ENCODE measurements at regions of chr7 and their contacts with region 1.

Region 1: DNA sequence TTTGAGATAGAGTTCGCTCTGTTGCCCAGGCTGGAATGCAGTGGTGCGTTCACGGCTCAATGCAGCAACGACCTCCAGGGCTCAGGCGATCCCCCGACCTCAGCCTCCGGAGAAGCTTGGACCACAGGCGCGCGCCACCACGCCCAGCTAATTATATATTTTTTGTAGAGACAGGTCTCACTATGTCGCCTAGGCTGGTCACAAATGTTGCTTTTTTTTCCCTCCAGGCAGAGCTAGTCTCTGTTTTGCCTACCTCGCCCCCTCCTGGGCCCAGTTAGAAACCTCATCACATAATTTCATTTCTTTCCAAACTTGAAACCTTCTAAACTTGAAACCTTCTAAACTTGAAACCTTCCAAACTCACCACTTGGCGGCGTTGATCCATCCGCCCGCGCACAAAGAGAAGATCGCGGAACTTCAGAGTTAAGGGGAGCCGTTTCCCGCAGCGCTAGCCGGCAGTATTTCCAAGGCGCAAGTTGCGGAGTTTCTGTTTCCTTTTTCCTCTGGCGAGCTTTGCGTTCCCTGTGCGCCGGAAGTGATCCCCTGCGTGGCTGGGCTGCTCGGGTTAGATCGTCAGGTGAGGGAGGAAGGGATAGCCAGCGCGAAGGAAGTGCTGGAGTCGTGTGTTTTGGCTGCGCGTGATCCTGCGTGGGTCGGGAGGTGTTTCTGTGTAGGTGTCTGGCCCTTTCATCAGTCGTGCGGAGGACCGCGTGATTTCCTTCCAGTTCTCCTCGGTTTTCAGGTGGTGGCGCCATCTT is at the start of gene SSBP1:
- DNase-seq: peak; percentile 93 to 95 (median 93)
- H3K4me3 ChIP-seq: peak within 1 kb of the TSS; percentile 94 to 95
- H3K4me3 Mint-ChIP-seq: peak within 1 kb of the TSS; percentile 98 to 100 (median 99)
- H3K27ac ChIP-seq: peak within 1 kb of the TSS; percentile 85
- H3K27ac Mint-ChIP-seq: peak within 1 kb of the TSS; percentile 96 to 99 (median 99)
- H3K4me1 ChIP-seq: peaks cover 36% of the 10 kb centered on the region
- H3K4me1 Mint-ChIP-seq: peaks cover 26 to 60% (median 38%) of the 10 kb centered on the region in 4 donors
- H3K27me3 ChIP-seq: no peaks in the 10 kb centered on the region
- H3K27me3 Mint-ChIP-seq: no peaks in the 10 kb centered on the region
- total RNA-seq, gene SSBP1: 88.2 to 91.2 TPM

Region 2: DNA sequence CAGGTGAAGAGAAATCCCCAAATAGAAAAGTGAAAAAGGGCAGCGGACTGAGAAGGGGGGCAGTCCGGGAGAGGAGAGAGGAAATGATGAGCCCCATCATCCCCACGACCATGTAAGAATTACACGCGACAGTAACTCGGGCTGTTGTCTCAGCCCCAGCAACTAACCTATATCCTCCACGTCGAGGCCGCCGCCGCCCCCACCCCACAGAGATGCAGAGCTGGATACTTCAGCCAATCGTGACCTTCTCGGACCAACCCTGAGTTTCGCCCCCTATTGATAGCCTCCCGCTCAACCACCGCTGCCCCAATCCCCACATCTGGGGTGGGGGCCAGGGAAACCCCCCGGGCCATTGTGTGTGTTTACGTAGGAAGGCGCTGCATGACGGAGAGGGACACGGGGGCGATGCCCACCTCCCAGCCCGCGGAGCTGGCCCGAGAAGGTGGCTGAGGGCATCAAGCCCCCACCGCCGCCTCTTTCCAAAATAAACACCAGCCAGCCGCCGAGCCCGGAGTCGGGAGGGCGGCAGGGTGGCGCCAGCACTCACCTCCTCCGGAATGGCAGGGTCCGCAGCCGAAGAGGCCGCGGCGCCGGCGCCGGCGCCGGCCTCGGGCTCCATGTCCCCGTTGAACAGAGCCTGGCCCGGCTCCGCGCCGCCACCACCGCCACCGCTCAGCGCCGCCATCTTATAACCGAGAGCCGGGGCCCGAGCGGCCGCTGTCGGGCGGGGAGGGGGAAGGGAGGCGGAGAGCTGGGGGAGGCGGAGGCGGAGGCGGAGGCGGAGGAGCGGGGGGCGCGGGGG is 813.8 kb before region 1 on chr7:
- CTCF ChIA-PET with region 1: no interaction called
- POLR2A ChIA-PET with region 1: no interaction called
- intact Hi-C with region 1: loop called (anchors 1 kb)
- DNase-seq: peak; percentile 79 to 92 (median 83)
- H3K4me3 ChIP-seq: peak overlapping the region; percentile 68 to 90
- H3K4me3 Mint-ChIP-seq: no peak overlapping the region
- H3K27ac ChIP-seq: peak overlapping the region; percentile 95
- H3K27ac Mint-ChIP-seq: no peak overlapping the region
- H3K4me1 ChIP-seq: peaks cover 28% of the 10 kb centered on the region
- H3K4me1 Mint-ChIP-seq: peaks cover 11 to 29% (median 18%) of the 10 kb centered on the region in 4 donors
- H3K27me3 ChIP-seq: no peaks in the 10 kb centered on the region
- H3K27me3 Mint-ChIP-seq: peaks cover 0 to 4% of the 10 kb centered on the region in 2 donors

Region 3: DNA sequence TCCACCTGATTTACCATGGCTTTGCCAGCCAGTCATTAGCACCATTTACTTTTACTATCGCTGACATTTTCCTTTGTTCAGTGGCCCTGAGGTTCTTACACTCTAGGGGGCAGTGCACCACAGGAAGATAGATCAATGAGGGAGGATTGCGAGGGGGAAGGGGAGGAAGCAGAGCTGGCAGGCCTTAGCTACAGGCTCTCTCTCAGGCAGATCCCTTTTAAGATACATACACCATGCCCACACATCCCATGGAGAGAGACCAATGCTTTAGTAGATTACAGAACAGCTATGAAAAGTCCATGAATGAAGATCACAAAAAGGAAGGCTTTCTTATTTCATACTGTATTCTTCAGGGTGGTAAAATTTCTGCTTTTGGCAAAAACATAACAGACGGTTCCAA is 83.5 kb before region 1 on chr7:
- CTCF ChIA-PET with region 1: interaction called, 74 read pairs
- POLR2A ChIA-PET with region 1: interaction called, 16 read pairs
- intact Hi-C with region 1: loop called (anchors 1 kb)
- DNase-seq: peak; percentile 62 to 71 (median 67)
- H3K4me3 ChIP-seq: no peak overlapping the region
- H3K4me3 Mint-ChIP-seq: no peak overlapping the region
- H3K27ac ChIP-seq: no peak overlapping the region
- H3K27ac Mint-ChIP-seq: peak overlapping the region in 6 of 7 donors; percentile 1 to 92 (median 76)
- H3K4me1 ChIP-seq: no peaks in the 10 kb centered on the region
- H3K4me1 Mint-ChIP-seq: peaks cover 4 to 7% (median 5%) of the 10 kb centered on the region in 4 donors
- H3K27me3 ChIP-seq: no peaks in the 10 kb centered on the region
- H3K27me3 Mint-ChIP-seq: no peaks in the 10 kb centered on the region

Region 4: GRCh38 chr7:141674702-141675101 is 63.3 kb before region 1 on chr7:
- CTCF ChIA-PET with region 1: no interaction called
- POLR2A ChIA-PET with region 1: no interaction called
- intact Hi-C with region 1: no loop called
- DNase-seq: no peak
- H3K4me3 ChIP-seq: no peak overlapping the region
- H3K4me3 Mint-ChIP-seq: no peak overlapping the region
- H3K27ac ChIP-seq: no peak overlapping the region
- H3K27ac Mint-ChIP-seq: peak overlapping the region in 2 of 7 donors; percentile 32 to 51
- H3K4me1 ChIP-seq: no peaks in the 10 kb centered on the region
- H3K4me1 Mint-ChIP-seq: no peaks in the 10 kb centered on the region
- H3K27me3 ChIP-seq: no peaks in the 10 kb centered on the region
- H3K27me3 Mint-ChIP-seq: no peaks in the 10 kb centered on the region

Region 5: DNA sequence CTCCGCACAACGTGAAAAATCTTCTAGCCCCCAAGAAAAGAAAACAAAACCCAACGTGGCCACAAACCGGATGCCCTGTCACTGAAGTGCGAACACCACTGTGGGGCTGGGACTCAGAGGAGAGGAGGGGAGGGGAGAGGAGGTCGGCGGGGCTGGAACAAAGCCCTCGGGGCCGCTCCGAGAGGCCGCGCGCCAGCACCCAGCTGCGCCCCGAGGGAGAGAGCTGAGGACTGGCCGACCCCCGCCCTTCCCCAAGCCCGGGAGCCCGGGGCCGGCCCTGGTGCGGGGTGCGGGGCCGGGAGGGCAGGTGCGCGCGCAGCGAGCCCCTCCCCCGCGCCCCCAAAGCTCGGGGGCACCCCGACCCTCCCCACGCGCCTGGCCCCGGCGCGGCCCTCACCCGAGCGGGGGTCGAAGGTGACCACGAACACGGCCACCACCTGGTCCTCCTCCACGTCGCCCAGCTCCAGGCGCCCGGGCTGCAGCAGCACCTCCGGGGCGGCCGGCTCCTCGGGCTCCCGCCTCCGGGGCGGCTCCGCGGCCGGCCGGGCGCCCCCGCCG is 36.4 kb before region 1 on chr7:
- CTCF ChIA-PET with region 1: interaction called, 67 read pairs
- POLR2A ChIA-PET with region 1: interaction called, 89 read pairs
- intact Hi-C with region 1: loop called (anchors 1 kb)
- DNase-seq: peak; percentile 77 to 88 (median 79)
- H3K4me3 ChIP-seq: peak overlapping the region in 1 of 2 donors; percentile 57
- H3K4me3 Mint-ChIP-seq: peak overlapping the region; percentile 87 to 94 (median 90)
- H3K27ac ChIP-seq: peak overlapping the region; percentile 74
- H3K27ac Mint-ChIP-seq: peak overlapping the region; percentile 87 to 95 (median 93)
- H3K4me1 ChIP-seq: peaks cover 44% of the 10 kb centered on the region
- H3K4me1 Mint-ChIP-seq: peaks cover 36 to 65% (median 47%) of the 10 kb centered on the region in 4 donors
- H3K27me3 ChIP-seq: no peaks in the 10 kb centered on the region
- H3K27me3 Mint-ChIP-seq: peaks cover 0 to 2% of the 10 kb centered on the region in 2 donors

Region 6: DNA sequence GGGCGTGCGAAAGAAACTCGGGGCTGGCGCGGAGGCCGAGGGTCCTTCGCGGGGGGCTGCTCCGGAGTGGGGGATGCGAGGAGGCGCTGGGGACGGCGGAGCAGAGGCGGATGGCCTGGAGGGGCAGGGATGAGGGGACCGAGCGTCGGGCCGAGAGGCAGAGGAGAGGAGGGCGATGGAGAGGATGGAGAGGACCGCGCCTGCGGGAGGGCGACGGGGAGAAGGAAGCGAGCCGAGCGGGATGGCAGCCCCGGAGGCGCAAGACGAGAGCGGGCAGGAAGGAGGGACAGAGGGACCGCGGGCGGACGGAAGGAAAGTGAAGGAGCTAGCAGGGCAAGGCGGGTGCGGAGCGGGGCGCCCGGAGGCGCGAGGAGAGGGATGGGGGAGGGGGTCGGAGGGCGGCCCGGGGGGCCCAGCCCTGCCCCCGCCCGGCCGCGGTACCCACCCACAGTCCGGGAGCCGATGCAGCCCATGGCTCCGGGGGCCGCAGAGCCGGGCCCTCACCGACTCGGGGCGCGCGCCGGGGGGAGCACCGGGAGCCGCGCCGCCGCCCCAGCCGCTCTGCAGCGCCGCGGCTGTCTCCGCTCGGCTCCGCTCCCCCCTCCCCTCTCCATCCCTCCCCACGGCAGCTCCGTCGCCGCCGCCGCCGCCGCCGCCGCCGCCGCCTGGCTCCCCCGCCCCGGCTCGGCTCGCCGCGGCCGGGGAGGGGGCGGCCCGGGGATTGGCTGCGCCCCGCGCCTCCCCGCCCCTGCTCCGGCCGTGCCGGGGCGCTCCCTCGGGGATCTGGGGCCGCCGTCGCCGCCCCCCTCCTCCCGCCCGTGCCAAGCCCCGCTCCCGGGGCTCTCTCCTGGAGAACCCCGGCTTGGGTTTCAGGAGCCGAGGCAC is 1624.4 kb after region 1 on chr7 and contains the start of gene FAM131B:
- CTCF ChIA-PET with region 1: no interaction called
- POLR2A ChIA-PET with region 1: no interaction called
- intact Hi-C with region 1: loop called (anchors 5 kb)
- DNase-seq: peak in 4 of 5 donors; percentile 34 to 60 (median 40)
- H3K4me3 ChIP-seq: peak within 1 kb of the TSS in 1 of 2 donors; percentile 55
- H3K4me3 Mint-ChIP-seq: peak within 1 kb of the TSS; percentile 84 to 90 (median 86)
- H3K27ac ChIP-seq: no peak within 1 kb of the TSS
- H3K27ac Mint-ChIP-seq: peak within 1 kb of the TSS in 5 of 7 donors; percentile 1 to 78 (median 57)
- H3K4me1 ChIP-seq: peaks cover 8% of the 10 kb centered on the region
- H3K4me1 Mint-ChIP-seq: peaks cover 9 to 16% (median 12%) of the 10 kb centered on the region in 4 donors
- H3K27me3 ChIP-seq: peaks cover 27% of the 10 kb centered on the region
- H3K27me3 Mint-ChIP-seq: peaks cover 17 to 20% of the 10 kb centered on the region in 2 donors
- total RNA-seq, gene FAM131B: 0.61 to 0.97 TPM

Measured in CD4-positive, alpha-beta memory T cell (primary cell).